Activated B cell treated with CpG ODN at 0.5 μM for 24 hours (primary cell): ENCODE measurements at regions of chr4 and their contacts with region 1.

Region 1: DNA sequence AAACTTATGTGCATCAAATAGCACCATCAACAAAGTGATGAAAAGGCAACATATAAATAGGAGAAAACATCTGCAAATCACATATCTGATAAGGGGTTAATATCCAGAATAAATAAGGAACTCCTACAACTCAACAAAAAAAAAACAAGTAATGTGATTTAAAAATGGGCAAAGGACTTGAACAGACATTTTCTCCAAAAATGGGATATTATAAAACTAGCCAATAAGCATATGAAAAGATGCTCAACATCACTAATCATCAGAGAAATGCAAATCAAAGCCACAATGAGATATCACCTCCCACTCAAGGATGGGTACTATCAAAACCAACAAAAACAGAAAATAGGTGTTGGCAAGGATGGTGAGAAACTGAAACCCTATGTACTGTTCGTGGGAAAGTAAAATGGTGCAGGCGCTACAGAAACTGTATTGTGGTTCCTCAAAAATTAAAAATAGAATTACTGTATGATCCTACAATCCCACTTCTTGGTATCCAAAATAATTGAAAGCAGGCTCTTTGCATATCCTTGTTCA is 2.4 kb downstream of the DNAJB14 start:
- DNase-seq: no peak
- ATAC-seq: no peak
- H3K4me3 Mint-ChIP-seq: no peak overlapping the region
- H3K27ac Mint-ChIP-seq: no peak overlapping the region
- H3K4me1 Mint-ChIP-seq: peaks cover 60% of the 10 kb centered on the region
- H3K27me3 Mint-ChIP-seq: no peaks in the 10 kb centered on the region
- CTCF ChIP-seq: no peak

Region 2: GRCh38 chr4:99921174-99921573 is 22.8 kb before region 1 on chr4:
- CTCF ChIA-PET with region 1: no interaction called
- POLR2A ChIA-PET with region 1: interaction called, 4 read pairs
- intact Hi-C with region 1: loop called (anchors 2 kb)
- DNase-seq: no peak
- ATAC-seq: no peak
- H3K4me3 Mint-ChIP-seq: no peak overlapping the region
- H3K27ac Mint-ChIP-seq: no peak overlapping the region
- H3K4me1 Mint-ChIP-seq: no peaks in the 10 kb centered on the region
- H3K27me3 Mint-ChIP-seq: no peaks in the 10 kb centered on the region
- CTCF ChIP-seq: no peak